ENCODE measurements at regions of chr3 and their contacts with region 1.

Region 1: GRCh38 chr3:101466465-101467309 is 46.3 kb downstream of the SENP7 start:
- DNase-seq: peak in 4 of 5 donors; percentile 31 to 80 (median 44)
- H3K4me3 ChIP-seq: no peak overlapping the region
- H3K4me3 Mint-ChIP-seq: peak overlapping the region in 6 of 8 donors; percentile 52 to 87 (median 78)
- H3K27ac ChIP-seq: peak overlapping the region; percentile 32
- H3K27ac Mint-ChIP-seq: peak overlapping the region in 6 of 7 donors; percentile 79 to 96 (median 90)
- H3K4me1 ChIP-seq: peaks cover 22% of the 10 kb centered on the region
- H3K4me1 Mint-ChIP-seq: peaks cover 52 to 82% (median 63%) of the 10 kb centered on the region in 4 donors
- H3K27me3 ChIP-seq: no peaks in the 10 kb centered on the region
- H3K27me3 Mint-ChIP-seq: no peaks in the 10 kb centered on the region

Region 2: GRCh38 chr3:101414121-101414520 is 52.6 kb before region 1 on chr3:
- CTCF ChIA-PET with region 1: no interaction called
- POLR2A ChIA-PET with region 1: no interaction called
- intact Hi-C with region 1: loop called (anchors 10 kb)
- DNase-seq: no peak
- H3K4me3 ChIP-seq: no peak overlapping the region
- H3K4me3 Mint-ChIP-seq: peak overlapping the region in 1 of 8 donors; percentile 9
- H3K27ac ChIP-seq: no peak overlapping the region
- H3K27ac Mint-ChIP-seq: peak overlapping the region in 5 of 7 donors; percentile 9 to 61 (median 48)
- H3K4me1 ChIP-seq: peaks cover 15% of the 10 kb centered on the region
- H3K4me1 Mint-ChIP-seq: peaks cover 26 to 48% (median 35%) of the 10 kb centered on the region in 4 donors
- H3K27me3 ChIP-seq: no peaks in the 10 kb centered on the region
- H3K27me3 Mint-ChIP-seq: no peaks in the 10 kb centered on the region

Measured in CD4-positive, alpha-beta memory T cell (primary cell).